Stomach (tissue), 19 donors: ENCODE measurements at regions of chr6 and their contacts with region 1.

Region 1: GRCh38 chr6:44096612-44097011 is 30.6 kb downstream of the MRPL14 start:
- DNase-seq: peak; percentile 83 to 94
- H3K4me3 ChIP-seq: no peak overlapping the region
- H3K27ac ChIP-seq: no peak overlapping the region
- H3K4me1 ChIP-seq: peaks cover 5 to 27% (median 10%) of the 10 kb centered on the region in 4 donors
- H3K27me3 ChIP-seq: no peaks in the 10 kb centered on the region
- CTCF ChIP-seq: peak in 5 of 7 experiments; percentile 68 to 83 (median 81)
- EP300 ChIP-seq: no peak
- POLR2A ChIP-seq: no peak

Region 2: DNA sequence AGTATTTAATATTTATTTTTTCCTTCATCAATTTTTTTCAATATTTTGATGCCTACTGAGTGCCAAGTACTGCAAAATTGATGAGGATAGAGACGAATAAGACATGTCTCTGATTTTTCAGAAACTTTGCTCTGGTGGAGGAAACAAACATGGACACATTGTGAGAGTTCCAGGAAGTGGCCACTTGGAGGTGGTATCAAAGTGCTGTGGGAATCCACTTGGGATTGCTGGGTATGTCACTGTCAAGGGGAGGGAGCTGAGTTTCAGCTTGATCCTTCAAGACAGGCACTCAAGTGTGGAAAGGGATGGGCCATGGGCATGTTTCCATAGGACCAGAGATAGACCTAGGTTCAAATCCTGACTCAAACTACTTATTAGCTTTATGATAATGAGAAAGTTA is 693.8 kb before region 1 on chr6:
- intact Hi-C with region 1: no loop called
- DNase-seq: no peak
- H3K4me3 ChIP-seq: no peak overlapping the region
- H3K27ac ChIP-seq: no peak overlapping the region
- H3K4me1 ChIP-seq: no peaks in the 10 kb centered on the region
- H3K27me3 ChIP-seq: peaks cover 0 to 5% (median 0%) of the 10 kb centered on the region in 3 donors
- CTCF ChIP-seq: no peak
- EP300 ChIP-seq: no peak
- POLR2A ChIP-seq: no peak

Region 3: GRCh38 chr6:44151348-44152108 is 54.9 kb after region 1 on chr6:
- intact Hi-C with region 1: loop called (anchors 5 kb)
- DNase-seq: peak; percentile 86 to 92
- H3K4me3 ChIP-seq: no peak overlapping the region
- H3K27ac ChIP-seq: no peak overlapping the region
- H3K4me1 ChIP-seq: peaks cover 7 to 51% (median 26%) of the 10 kb centered on the region in 4 donors
- H3K27me3 ChIP-seq: no peaks in the 10 kb centered on the region
- CTCF ChIP-seq: peak in 6 of 7 experiments; percentile 92 to 100 (median 98)
- EP300 ChIP-seq: no peak
- POLR2A ChIP-seq: no peak